ENCODE measurements at regions of chr12 and their contacts with region 1.

Region 1: DNA sequence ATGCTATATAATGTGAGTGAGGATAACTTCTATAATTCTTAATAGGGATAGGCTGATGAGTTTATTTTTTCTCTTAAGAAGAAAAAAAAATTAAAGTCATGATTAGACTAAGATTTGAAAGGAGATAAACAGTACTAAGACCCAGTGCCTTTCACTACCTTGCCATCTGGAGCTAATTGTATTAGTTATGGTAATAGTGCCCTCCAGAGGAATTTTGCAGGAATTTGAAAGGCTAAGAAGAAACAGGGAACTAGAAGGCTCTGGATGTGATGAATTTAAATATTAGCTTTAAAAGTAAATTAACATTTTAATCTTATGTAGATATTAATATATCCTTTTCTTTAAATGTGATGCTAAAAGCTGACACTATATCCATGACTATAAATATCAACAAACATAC is 36.6 kb upstream of the PIK3C2G start:
- DNase-seq: no peak
- H3K4me3 Mint-ChIP-seq: no peak overlapping the region
- H3K27ac Mint-ChIP-seq: no peak overlapping the region
- H3K4me1 Mint-ChIP-seq: no peaks in the 10 kb centered on the region
- H3K27me3 Mint-ChIP-seq: no peaks in the 10 kb centered on the region

Region 2: DNA sequence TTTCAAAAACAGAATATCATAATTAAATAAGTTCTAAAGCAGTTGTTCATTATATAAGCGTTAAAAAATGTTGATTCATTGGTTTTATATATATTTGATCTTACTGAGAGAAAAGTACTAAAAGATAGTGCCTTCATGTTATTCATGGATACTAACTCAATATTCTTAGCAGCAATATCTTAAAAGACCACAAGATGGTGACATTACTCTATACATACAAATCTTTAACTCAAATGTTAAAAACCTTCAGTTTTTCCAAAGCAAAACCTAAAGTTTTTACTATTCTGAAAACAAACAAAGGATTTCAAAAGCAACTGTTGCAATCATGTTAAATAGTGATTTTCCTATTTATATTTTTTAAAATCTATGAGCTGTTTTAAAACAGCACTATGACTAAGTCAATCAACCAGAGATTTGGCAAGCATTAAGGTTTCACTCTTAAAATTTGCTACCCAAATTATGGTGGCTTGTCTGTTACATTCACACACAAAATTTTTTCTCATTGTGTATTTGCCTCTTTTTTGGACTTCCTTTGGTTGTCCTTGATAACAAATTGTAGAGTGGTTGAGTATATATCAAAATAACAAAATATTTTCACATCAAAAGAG is 84.7 kb before region 1 on chr12:
- CTCF ChIA-PET with region 1: interaction called, 4 read pairs
- POLR2A ChIA-PET with region 1: no interaction called
- intact Hi-C with region 1: loop called (anchors 5 kb)
- DNase-seq: no peak
- H3K4me3 Mint-ChIP-seq: no peak overlapping the region
- H3K27ac Mint-ChIP-seq: no peak overlapping the region
- H3K4me1 Mint-ChIP-seq: no peaks in the 10 kb centered on the region
- H3K27me3 Mint-ChIP-seq: peaks cover 2% of the 10 kb centered on the region

Region 3: GRCh38 chr12:18158774-18159557 is 65.8 kb before region 1 on chr12:
- CTCF ChIA-PET with region 1: interaction called, 7 read pairs
- POLR2A ChIA-PET with region 1: no interaction called
- intact Hi-C with region 1: loop called (anchors 2 kb)
- DNase-seq: no peak
- H3K4me3 Mint-ChIP-seq: no peak overlapping the region
- H3K27ac Mint-ChIP-seq: no peak overlapping the region
- H3K4me1 Mint-ChIP-seq: peaks cover 2% of the 10 kb centered on the region
- H3K27me3 Mint-ChIP-seq: no peaks in the 10 kb centered on the region

Region 4: DNA sequence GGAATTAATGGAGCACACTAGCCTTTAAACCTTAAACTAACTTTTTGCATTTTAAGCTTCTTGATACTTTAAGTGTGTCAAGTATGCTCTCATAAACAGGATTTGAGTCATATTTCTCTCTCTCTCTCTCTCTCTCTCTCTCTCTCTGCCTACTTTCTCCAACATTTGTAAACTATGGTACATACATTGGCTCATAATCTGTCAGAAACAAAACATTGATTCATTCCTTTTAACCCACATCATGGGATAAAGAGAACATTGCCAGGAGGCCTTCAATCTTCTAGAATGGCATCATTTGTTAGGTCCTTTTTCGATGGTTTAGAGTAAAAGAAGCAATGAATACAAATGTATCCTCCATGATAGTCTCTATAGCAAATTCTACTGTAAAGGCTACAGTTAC is 53.2 kb before region 1 on chr12:
- CTCF ChIA-PET with region 1: no interaction called
- POLR2A ChIA-PET with region 1: no interaction called
- intact Hi-C with region 1: no loop called
- DNase-seq: no peak
- H3K4me3 Mint-ChIP-seq: no peak overlapping the region
- H3K27ac Mint-ChIP-seq: no peak overlapping the region
- H3K4me1 Mint-ChIP-seq: no peaks in the 10 kb centered on the region
- H3K27me3 Mint-ChIP-seq: peaks cover 1% of the 10 kb centered on the region

Measured in activated CD4-positive, alpha-beta memory T cell treated with anti-CD3 and anti-CD28 coated beads for 36 hours (primary cell).